AG04449 (cell line): ENCODE measurements at regions of chr10 and their contacts with region 1.

Region 1: DNA sequence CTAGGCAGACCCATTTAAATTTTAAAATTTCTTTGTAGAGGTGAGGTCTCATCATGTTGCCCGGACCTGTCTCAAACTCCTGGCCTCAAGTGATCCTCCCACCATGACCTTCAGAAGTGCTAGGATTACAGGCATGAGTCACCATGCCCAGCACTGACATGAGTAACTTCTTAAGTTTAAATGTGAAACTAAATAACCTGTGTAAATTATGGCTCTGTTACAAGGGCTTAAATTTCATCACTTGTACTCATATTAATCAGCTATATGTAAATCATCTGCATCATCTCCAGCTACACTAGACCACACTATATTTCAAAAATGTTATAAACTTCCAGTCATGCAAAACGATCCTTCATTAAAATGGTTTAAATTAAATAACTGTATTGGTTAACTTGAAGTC is 56.1 kb downstream of the ATAD1 start:
- DNase-seq: no peak
- H3K4me3 ChIP-seq: no peak overlapping the region
- CTCF ChIP-seq: no peak

Region 2: GRCh38 chr10:87740232-87740631 is 21.7 kb before region 1 on chr10:
- CTCF ChIA-PET with region 1: no interaction called
- POLR2A ChIA-PET with region 1: no interaction called
- DNase-seq: peak; percentile 54
- H3K4me3 ChIP-seq: no peak overlapping the region
- CTCF ChIP-seq: no peak

Region 3: DNA sequence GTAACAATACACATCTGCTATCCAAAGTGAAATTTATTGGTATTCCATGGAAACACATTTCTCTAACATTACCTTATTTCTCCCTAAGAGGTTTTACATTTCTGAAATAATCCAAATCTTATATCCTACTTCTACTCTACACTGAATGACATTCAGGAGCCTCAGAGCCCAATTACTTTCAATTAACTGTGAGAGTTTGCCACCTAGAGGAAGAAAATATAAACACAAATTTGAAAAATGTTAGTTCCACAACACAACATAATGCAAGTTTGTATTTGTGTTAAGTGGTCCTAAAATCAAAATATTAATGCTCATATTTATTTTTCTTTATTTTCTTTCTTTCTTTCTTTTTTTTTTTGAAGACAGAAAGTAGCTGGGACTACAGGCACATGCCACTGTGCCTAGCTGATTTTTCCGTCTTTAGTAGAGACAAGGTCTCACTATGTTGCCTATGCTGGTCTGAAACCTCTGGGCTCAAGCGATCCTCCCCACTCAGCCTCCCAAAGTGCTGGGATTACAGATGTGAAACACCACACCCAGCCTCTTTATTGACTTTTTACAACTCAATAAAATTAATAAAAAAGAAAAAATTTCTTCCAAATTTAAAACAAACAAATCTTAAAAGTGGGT is 10.1 kb after region 1 on chr10:
- CTCF ChIA-PET with region 1: interaction called, 27 read pairs
- POLR2A ChIA-PET with region 1: no interaction called
- DNase-seq: no peak
- H3K4me3 ChIP-seq: no peak overlapping the region
- CTCF ChIP-seq: peak; percentile 11